Activated T-helper 1 cell treated with anti-CD3 and anti-CD28 coated beads, Interleukin-12 subunit alpha, Interleukin-12 subunit beta, Interleukin-2, Interleukin-4 antibody, amounts not matched to agents 30 ng/mL and 10 ng/mL and 1 ng/mL, durations not matched to agents 14 hours and 24 hours and 36 hours (primary cell): ENCODE measurements at regions of chr11 and their contacts with region 1.

Region 1: DNA sequence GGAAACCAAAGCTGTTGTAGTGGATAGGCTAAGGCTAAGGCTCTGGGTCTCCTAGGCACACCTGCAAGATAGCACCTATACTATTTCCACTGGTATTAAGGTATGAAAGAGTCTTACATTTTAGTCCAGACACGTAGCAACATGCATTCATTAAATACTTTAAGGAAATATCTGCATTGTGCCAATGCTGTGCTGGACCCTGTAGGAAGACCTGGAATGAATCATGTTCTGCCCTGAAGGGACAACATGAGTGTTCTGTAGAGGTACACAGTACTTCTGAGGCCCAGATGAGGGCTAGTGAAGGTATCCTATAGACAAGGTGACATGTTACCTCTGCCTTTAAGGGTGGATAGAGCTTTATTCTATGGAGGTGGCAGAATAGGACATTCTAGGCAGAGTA is 35.2 kb upstream of the RRM1 start:
- DNase-seq: no peak
- H3K4me3 Mint-ChIP-seq: no peak overlapping the region
- H3K27ac Mint-ChIP-seq: no peak overlapping the region
- H3K4me1 Mint-ChIP-seq: peaks cover 27% of the 10 kb centered on the region
- H3K27me3 Mint-ChIP-seq: no peaks in the 10 kb centered on the region

Region 2: GRCh38 chr11:3994030-3994640 is 65.3 kb before region 1 on chr11:
- intact Hi-C with region 1: loop called (anchors 5 kb)
- DNase-seq: no peak
- H3K4me3 Mint-ChIP-seq: no peak overlapping the region
- H3K27ac Mint-ChIP-seq: peak overlapping the region; percentile 31
- H3K4me1 Mint-ChIP-seq: peaks cover 37% of the 10 kb centered on the region
- H3K27me3 Mint-ChIP-seq: no peaks in the 10 kb centered on the region